Activated CD4-positive, alpha-beta T cell treated with anti-CD3 and anti-CD28 coated beads, Interleukin-2, amount 10 ng/mL, durations not matched to agents 7 days and 5 days (primary cell): ENCODE measurements at regions of chr19 and their contacts with region 1.

Region 1: GRCh38 chr19:14059093-14059480 is 2.8 kb downstream of the PALM3 start:
- DNase-seq: peak; percentile 58
- H3K4me3 Mint-ChIP-seq: no peak overlapping the region
- H3K27ac Mint-ChIP-seq: no peak overlapping the region
- H3K4me1 Mint-ChIP-seq: peaks cover 17% of the 10 kb centered on the region
- H3K27me3 Mint-ChIP-seq: peaks cover 41% of the 10 kb centered on the region

Region 2: GRCh38 chr19:13880059-13881043 is 178.7 kb before region 1 on chr19:
- CTCF ChIA-PET with region 1: interaction called, 13 read pairs
- POLR2A ChIA-PET with region 1: no interaction called
- DNase-seq: peak; percentile 97
- H3K4me3 Mint-ChIP-seq: peak overlapping the region; percentile 30
- H3K27ac Mint-ChIP-seq: peak overlapping the region; percentile 76
- H3K4me1 Mint-ChIP-seq: peaks cover 44% of the 10 kb centered on the region
- H3K27me3 Mint-ChIP-seq: no peaks in the 10 kb centered on the region

Region 3: GRCh38 chr19:13986348-13986904 is 72.7 kb before region 1 on chr19:
- CTCF ChIA-PET with region 1: no interaction called
- POLR2A ChIA-PET with region 1: no interaction called
- DNase-seq: peak; percentile 99
- H3K4me3 Mint-ChIP-seq: peak overlapping the region; percentile 68
- H3K27ac Mint-ChIP-seq: peak overlapping the region; percentile 98
- H3K4me1 Mint-ChIP-seq: peaks cover 83% of the 10 kb centered on the region
- H3K27me3 Mint-ChIP-seq: no peaks in the 10 kb centered on the region

Region 4: GRCh38 chr19:14048443-14049153 is 10.5 kb before region 1 on chr19:
- CTCF ChIA-PET with region 1: interaction called, 36 read pairs
- POLR2A ChIA-PET with region 1: no interaction called
- DNase-seq: peak; percentile 76
- H3K4me3 Mint-ChIP-seq: no peak overlapping the region
- H3K27ac Mint-ChIP-seq: no peak overlapping the region
- H3K4me1 Mint-ChIP-seq: peaks cover 4% of the 10 kb centered on the region
- H3K27me3 Mint-ChIP-seq: no peaks in the 10 kb centered on the region

Region 5: GRCh38 chr19:14218620-14219330 is 159.7 kb after region 1 on chr19:
- CTCF ChIA-PET with region 1: no interaction called
- POLR2A ChIA-PET with region 1: no interaction called
- DNase-seq: no peak
- H3K4me3 Mint-ChIP-seq: no peak overlapping the region
- H3K27ac Mint-ChIP-seq: no peak overlapping the region
- H3K4me1 Mint-ChIP-seq: peaks cover 23% of the 10 kb centered on the region
- H3K27me3 Mint-ChIP-seq: peaks cover 3% of the 10 kb centered on the region